Activated B cell treated with CpG ODN at 0.5 μM for 24 hours (primary cell): ENCODE measurements at regions of chr14 and their contacts with region 1.

Region 1: GRCh38 chr14:44897045-44897844 is 64.5 kb downstream of the KLHL28 start:
- DNase-seq: peak; percentile 75
- ATAC-seq: peak; percentile 97
- H3K4me3 Mint-ChIP-seq: peak overlapping the region; percentile 93
- H3K27ac Mint-ChIP-seq: peak overlapping the region; percentile 94
- H3K4me1 Mint-ChIP-seq: peaks cover 17% of the 10 kb centered on the region
- H3K27me3 Mint-ChIP-seq: no peaks in the 10 kb centered on the region
- CTCF ChIP-seq: no peak

Region 2: GRCh38 chr14:45253068-45253753 is 356.0 kb after region 1 on chr14 and contains the start of gene MIS18BP1:
- CTCF ChIA-PET with region 1: no interaction called
- POLR2A ChIA-PET with region 1: interaction called, 5 read pairs
- intact Hi-C with region 1: loop called (anchors 1 kb)
- DNase-seq: peak; percentile 87
- ATAC-seq: peak; percentile 88
- H3K4me3 Mint-ChIP-seq: peak within 1 kb of the TSS; percentile 94
- H3K27ac Mint-ChIP-seq: peak within 1 kb of the TSS; percentile 95
- H3K4me1 Mint-ChIP-seq: peaks cover 38% of the 10 kb centered on the region
- H3K27me3 Mint-ChIP-seq: no peaks in the 10 kb centered on the region
- CTCF ChIP-seq: no peak
- total RNA-seq, gene MIS18BP1: 38.8 and 47.1 TPM in 2 replicates